ENCODE measurements at regions of chr9 and their contacts with region 1.

Region 1: DNA sequence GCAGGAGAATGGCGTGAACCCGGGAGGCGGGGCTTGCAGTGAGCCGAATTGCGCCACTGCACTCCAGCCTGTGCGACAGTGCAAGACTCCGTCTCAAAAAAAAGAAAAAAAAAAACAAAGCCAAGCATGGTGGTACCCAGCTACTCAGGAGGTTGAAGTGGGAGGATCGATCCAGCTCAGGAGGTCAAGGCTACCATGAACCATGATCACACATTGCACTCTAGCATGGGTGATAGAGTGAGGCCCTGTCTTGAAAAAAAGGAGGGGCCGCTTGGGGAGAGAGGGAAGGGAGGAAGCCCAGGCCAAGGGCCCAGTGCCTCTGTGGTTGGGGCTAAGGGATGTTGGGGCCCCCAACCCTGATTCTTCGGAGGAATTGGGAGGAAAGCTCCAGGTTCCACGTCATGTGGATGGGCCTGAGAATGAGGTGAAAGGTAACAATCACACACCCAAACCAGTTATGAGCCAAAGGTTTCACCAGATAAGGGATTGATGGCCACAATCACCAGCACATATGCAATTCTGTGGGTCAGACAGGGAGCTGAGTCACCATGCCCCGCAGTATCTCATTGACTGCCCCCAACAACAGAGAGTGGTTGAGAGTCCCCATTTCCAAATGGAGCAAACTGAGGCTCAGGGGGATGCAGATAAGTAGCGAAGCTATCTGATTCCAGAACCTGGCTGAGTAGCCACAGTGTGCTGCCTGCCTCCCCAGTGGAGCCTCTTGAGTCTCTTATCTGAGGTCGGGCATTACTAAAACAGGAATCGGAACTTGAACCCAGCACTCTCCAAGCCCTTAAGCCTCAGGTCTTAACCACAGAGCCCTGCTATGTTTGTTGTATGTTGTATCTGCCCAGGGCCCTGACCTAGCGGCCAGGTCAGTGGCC is 20.5 kb downstream of the SWI5 start:
- DNase-seq: no peak
- H3K4me3 Mint-ChIP-seq: no peak overlapping the region
- H3K27ac Mint-ChIP-seq: no peak overlapping the region
- H3K4me1 Mint-ChIP-seq: peaks cover 10% of the 10 kb centered on the region
- H3K27me3 Mint-ChIP-seq: no peaks in the 10 kb centered on the region
- CTCF ChIP-seq: no peak

Region 2: DNA sequence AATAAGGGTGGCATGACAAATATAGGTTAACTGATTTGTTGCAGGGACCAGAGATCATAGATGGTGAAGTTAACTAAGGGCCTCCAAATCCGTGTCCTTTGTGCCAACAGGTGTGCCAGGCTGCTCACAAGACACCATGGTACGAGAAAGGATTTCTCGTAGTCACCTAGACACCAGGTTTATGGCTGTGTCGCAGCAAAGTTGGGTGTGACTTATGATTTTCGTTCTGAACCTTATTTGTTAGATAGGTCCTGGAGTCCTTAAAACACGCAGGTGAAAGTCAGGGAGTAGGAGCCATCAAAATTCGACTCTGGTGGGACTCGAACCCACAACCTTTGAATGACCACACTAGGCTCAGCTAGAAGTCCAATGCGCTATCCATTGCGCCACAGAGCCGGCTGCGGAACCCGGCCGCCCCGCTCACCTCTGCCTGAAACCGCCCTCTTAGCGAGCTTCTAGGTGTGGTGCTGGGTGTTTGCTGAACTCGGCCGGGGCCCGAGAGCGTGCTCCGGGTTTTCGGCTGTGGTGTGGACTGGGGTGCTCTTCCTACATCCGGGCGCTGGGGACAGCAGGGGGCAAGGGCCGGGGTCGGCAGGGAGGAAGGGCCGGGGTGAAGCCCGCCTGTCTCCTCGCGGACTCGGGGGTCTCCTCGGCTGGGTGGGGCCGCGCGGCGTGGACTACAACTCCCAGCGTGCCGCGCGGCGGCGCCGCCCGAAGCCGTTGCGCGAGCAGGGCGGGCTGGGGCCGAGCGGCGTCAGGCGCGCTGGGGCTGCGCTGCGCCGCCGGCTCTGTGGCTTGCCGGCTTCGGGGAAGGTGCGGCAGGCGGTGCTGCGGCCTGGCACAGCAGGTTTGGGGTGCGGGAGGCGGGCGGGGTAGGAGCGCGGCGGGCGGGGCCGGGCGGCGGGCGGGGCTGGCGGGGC is 43.5 kb after region 1 on chr9 and contains the start of gene SLC27A4:
- CTCF ChIA-PET with region 1: interaction called, 11 read pairs
- intact Hi-C with region 1: loop called (anchors 2 kb)
- DNase-seq: peak; percentile 81
- H3K4me3 Mint-ChIP-seq: peak within 1 kb of the TSS; percentile 83
- H3K27ac Mint-ChIP-seq: peak within 1 kb of the TSS; percentile 73
- H3K4me1 Mint-ChIP-seq: no peaks in the 10 kb centered on the region
- H3K27me3 Mint-ChIP-seq: no peaks in the 10 kb centered on the region
- CTCF ChIP-seq: no peak
- total RNA-seq, gene SLC27A4: 13.8 and 15.3 TPM in 2 replicates

Region 3: GRCh38 chr9:128412120-128412790 is 115.7 kb after region 1 on chr9:
- CTCF ChIA-PET with region 1: no interaction called
- intact Hi-C with region 1: loop called (anchors 5 kb)
- DNase-seq: peak; percentile 61
- H3K4me3 Mint-ChIP-seq: no peak overlapping the region
- H3K27ac Mint-ChIP-seq: no peak overlapping the region
- H3K4me1 Mint-ChIP-seq: peaks cover 27% of the 10 kb centered on the region
- H3K27me3 Mint-ChIP-seq: peaks cover 33% of the 10 kb centered on the region
- CTCF ChIP-seq: no peak

Region 4: GRCh38 chr9:128987805-128988204 is 691.2 kb after region 1 on chr9:
- CTCF ChIA-PET with region 1: no interaction called
- intact Hi-C with region 1: no loop called
- DNase-seq: no peak
- H3K4me3 Mint-ChIP-seq: no peak overlapping the region
- H3K27ac Mint-ChIP-seq: no peak overlapping the region
- H3K4me1 Mint-ChIP-seq: no peaks in the 10 kb centered on the region
- H3K27me3 Mint-ChIP-seq: no peaks in the 10 kb centered on the region
- CTCF ChIP-seq: no peak